ENCODE measurements at regions of chr9 and their contacts with region 1.

Region 1: GRCh38 chr9:115276621-115277020 is 158.7 kb upstream of the TNC start:
- DNase-seq: no peak
- ATAC-seq: no peak
- H3K4me3 ChIP-seq: no peak overlapping the region
- H3K27ac ChIP-seq: no peak overlapping the region
- H3K4me1 ChIP-seq: no peaks in the 10 kb centered on the region
- H3K27me3 ChIP-seq: peaks cover 0 to 4% (median 0%) of the 10 kb centered on the region in 7 donors
- CTCF ChIP-seq: no peak

Region 2: DNA sequence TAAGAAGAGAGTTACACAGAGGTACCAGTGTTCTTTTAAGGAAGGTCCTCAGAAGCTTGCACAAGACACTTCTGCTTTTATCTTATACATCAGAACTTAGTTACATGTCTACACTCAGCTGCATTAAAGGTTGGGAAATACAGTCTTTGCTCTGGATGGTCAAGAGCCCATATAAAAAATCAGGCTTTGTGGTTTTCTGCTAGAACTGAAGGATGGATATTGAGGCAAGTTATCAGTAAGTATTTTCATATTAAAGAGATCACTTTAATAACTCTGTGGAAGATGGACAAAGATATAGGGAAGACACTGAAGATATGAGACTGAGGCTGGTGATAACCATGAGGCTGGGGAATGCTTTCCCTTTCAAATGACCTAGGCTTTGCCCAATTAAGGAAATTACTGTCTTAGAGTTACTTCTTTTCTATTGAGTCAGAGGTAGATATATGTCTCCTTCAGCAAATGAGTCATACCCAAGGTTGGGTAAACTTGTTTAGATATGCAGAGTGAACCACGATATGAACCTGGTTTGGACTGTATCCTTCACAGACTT is 71.6 kb before region 1 on chr9:
- intact Hi-C with region 1: no loop called
- DNase-seq: no peak
- ATAC-seq: no peak
- H3K4me3 ChIP-seq: no peak overlapping the region
- H3K27ac ChIP-seq: no peak overlapping the region
- H3K4me1 ChIP-seq: peaks cover 0 to 9% (median 0%) of the 10 kb centered on the region in 9 donors
- H3K27me3 ChIP-seq: peaks cover 0 to 7% (median 0%) of the 10 kb centered on the region in 7 donors
- CTCF ChIP-seq: no peak

Region 3: GRCh38 chr9:115220319-115221005 is 56.2 kb before region 1 on chr9:
- intact Hi-C with region 1: loop called in 1 of 10 experiments (anchors 10 kb)
- DNase-seq: no peak
- ATAC-seq: no peak
- H3K4me3 ChIP-seq: no peak overlapping the region
- H3K27ac ChIP-seq: no peak overlapping the region
- H3K4me1 ChIP-seq: no peaks in the 10 kb centered on the region
- H3K27me3 ChIP-seq: peaks cover 0 to 4% (median 0%) of the 10 kb centered on the region in 7 donors
- CTCF ChIP-seq: no peak

Measured in heart right ventricle (tissue), 16 donors.